ENCODE measurements at regions of chr18 and their contacts with region 1.

Region 1: GRCh38 chr18:6881034-6881820 is 151.7 kb downstream of the ARHGAP28 start:
- DNase-seq: peak; percentile 52
- H3K4me3 ChIP-seq: no peak overlapping the region
- CTCF ChIP-seq: no peak

Region 2: GRCh38 chr18:6537475-6537874 is 343.8 kb before region 1 on chr18:
- in situ Hi-C with region 1: loop called (anchors 5 kb)
- DNase-seq: no peak
- H3K4me3 ChIP-seq: no peak overlapping the region
- CTCF ChIP-seq: no peak

Region 3: GRCh38 chr18:6557053-6557779 is 324.0 kb before region 1 on chr18:
- in situ Hi-C with region 1: loop called (anchors 5 kb)
- DNase-seq: no peak
- H3K4me3 ChIP-seq: no peak overlapping the region
- CTCF ChIP-seq: no peak

Region 4: DNA sequence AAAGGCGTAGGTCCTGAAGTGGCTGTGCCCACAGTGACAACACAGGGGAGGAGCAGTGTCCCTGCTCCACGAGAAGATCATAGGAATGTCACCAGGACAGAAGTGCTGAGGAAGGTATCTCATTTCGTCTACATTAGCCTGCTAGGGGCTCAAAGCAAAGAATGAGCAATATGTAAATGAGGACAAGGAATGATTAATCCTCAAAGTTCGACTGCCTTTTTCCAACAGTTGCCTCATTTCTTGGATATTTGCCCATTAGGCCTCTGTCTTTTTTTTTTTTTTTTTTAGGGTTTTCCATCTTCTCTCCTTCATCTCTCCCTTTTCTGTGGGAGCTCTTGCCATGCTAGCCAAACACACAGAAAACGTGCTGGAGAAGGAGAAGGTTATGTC is 257.0 kb before region 1 on chr18:
- in situ Hi-C with region 1: loop called (anchors 10 kb)
- DNase-seq: peak; percentile 51
- H3K4me3 ChIP-seq: no peak overlapping the region
- CTCF ChIP-seq: no peak

Region 5: DNA sequence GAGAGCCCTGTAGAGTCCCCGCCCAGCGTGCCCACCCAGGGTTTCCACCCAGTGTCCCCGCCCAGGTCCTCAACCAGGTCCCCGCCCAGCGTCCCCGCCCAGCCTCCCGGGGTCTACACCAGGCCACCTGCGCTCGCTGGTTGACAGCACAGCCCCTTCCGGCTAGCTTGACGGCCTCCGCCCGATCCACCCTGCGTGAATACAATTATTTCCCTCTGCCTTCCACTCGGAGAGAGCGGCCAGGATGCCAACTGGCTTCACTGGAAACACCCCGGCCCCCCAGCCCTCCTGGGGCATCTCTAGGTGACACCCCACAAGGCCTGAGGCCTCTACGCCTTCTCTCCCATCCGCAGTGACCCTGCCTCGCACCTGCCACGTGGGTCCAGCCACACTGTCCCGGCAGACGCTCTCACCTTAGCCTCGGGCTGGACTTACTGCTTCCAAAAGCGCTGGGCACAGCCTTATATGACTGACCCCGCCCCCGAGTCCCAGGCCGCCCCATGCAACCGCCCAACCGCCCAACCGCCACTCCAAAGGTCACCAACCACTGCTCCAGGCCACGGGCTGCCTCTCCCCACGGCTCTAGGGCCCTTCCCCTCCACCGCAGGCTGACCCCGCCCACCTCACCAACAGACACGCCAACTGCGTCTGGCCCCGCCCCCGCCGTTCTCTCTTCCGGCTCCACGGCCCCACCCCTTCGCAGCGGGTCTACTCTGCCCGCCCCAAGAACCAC is 48.3 kb after region 1 on chr18:
- in situ Hi-C with region 1: no loop called
- DNase-seq: no peak
- H3K4me3 ChIP-seq: no peak overlapping the region
- CTCF ChIP-seq: no peak